ENCODE measurements at regions of chr6 and their contacts with region 1.

Region 1: GRCh38 chr6:157314705-157315321 is 8.5 kb downstream of the TMEM242 start:
- DNase-seq: peak; percentile 44
- H3K4me3 Mint-ChIP-seq: no peak overlapping the region
- H3K27ac Mint-ChIP-seq: no peak overlapping the region
- H3K4me1 Mint-ChIP-seq: peaks cover 2% of the 10 kb centered on the region
- H3K27me3 Mint-ChIP-seq: no peaks in the 10 kb centered on the region

Region 2: GRCh38 chr6:157339432-157339831 is 24.6 kb after region 1 on chr6:
- CTCF ChIA-PET with region 1: interaction called, 39 read pairs
- DNase-seq: no peak
- H3K4me3 Mint-ChIP-seq: no peak overlapping the region
- H3K27ac Mint-ChIP-seq: no peak overlapping the region
- H3K4me1 Mint-ChIP-seq: no peaks in the 10 kb centered on the region
- H3K27me3 Mint-ChIP-seq: peaks cover 59% of the 10 kb centered on the region

Region 3: DNA sequence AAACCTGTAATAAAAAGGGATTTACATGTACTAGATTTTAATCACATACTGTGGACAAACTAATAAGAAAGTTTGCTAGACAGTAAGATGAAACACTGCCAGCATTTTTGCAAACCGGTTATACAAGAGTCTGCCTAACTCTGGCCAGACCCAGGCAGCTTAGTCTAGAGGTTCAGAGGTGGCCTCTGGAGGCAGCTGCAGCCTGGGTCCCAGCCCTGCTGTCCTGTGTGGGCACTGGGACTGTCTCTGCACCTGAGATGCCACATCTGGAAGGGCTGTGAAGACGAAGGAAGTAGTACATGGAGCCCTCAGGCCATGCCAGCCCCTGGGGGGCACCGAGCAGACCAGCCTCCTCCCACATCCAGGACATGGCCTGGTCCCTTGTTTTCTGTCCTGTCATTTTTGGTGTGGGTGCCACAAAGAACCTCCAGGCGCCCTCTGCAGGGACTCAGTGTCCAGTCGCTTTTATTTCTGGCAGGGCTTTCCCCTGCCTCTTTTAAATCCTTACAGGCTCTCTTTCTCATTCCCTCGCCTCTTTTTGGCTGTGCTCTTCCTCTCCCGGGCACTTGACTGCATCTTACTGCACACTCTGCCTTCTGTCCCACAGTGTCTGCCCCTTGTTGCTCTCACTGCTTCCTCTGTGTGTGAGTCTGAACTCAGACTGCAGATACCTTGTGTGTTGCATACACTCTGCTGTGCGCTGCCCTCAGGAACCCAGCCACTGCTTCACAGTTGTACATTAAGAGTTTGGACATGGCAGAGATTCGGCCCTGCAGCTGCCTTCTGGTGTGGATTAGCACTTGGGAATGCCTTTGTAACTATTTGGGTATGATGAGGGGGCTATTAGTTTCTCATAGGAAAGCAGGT is 282.9 kb after region 1 on chr6:
- CTCF ChIA-PET with region 1: interaction called, 22 read pairs
- DNase-seq: peak; percentile 65
- H3K4me3 Mint-ChIP-seq: no peak overlapping the region
- H3K27ac Mint-ChIP-seq: no peak overlapping the region
- H3K4me1 Mint-ChIP-seq: no peaks in the 10 kb centered on the region
- H3K27me3 Mint-ChIP-seq: peaks cover 4% of the 10 kb centered on the region

Region 4: DNA sequence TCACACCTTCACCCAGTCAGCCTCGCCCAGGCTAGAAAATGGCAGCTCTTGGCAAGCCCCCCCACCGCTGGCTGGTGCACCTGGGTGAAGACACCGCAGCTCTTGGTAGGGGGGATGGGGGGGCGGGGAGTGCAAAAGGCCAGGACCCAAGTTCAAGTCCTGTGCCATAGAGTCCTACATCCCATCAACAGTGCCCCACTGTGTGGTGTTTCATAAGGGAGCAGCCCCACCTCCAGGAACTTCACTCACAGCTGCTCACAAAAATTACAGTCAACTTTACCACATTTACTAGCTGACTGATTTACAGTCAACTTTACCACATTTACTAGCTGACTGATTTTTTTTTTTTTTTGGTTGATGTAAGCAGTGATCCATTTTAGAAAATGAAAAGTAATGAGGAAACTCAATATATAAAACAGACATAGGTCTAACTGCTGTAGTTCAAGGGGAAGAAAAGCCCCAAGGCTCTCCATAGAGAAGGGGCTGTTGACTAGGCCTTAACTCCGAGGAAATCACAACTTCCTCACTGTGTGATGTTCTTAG is 299.3 kb after region 1 on chr6:
- CTCF ChIA-PET with region 1: interaction called, 28 read pairs
- DNase-seq: no peak
- H3K4me3 Mint-ChIP-seq: no peak overlapping the region
- H3K27ac Mint-ChIP-seq: no peak overlapping the region
- H3K4me1 Mint-ChIP-seq: no peaks in the 10 kb centered on the region
- H3K27me3 Mint-ChIP-seq: no peaks in the 10 kb centered on the region

Region 5: GRCh38 chr6:157667211-157668008 is 352.6 kb after region 1 on chr6:
- CTCF ChIA-PET with region 1: interaction called, 35 read pairs
- DNase-seq: peak; percentile 69
- H3K4me3 Mint-ChIP-seq: no peak overlapping the region
- H3K27ac Mint-ChIP-seq: no peak overlapping the region
- H3K4me1 Mint-ChIP-seq: peaks cover 18% of the 10 kb centered on the region
- H3K27me3 Mint-ChIP-seq: peaks cover 32% of the 10 kb centered on the region